ENCODE measurements at regions of chr7 and their contacts with region 1.

Region 1: GRCh38 chr7:43700059-43700501 is 29.2 kb downstream of the COA1 start:
- DNase-seq: no peak
- ATAC-seq: peak; percentile 50
- H3K4me3 Mint-ChIP-seq: no peak overlapping the region
- H3K27ac Mint-ChIP-seq: no peak overlapping the region
- H3K4me1 Mint-ChIP-seq: peaks cover 60% of the 10 kb centered on the region
- H3K27me3 Mint-ChIP-seq: no peaks in the 10 kb centered on the region
- CTCF ChIP-seq: peak; percentile 91

Region 2: DNA sequence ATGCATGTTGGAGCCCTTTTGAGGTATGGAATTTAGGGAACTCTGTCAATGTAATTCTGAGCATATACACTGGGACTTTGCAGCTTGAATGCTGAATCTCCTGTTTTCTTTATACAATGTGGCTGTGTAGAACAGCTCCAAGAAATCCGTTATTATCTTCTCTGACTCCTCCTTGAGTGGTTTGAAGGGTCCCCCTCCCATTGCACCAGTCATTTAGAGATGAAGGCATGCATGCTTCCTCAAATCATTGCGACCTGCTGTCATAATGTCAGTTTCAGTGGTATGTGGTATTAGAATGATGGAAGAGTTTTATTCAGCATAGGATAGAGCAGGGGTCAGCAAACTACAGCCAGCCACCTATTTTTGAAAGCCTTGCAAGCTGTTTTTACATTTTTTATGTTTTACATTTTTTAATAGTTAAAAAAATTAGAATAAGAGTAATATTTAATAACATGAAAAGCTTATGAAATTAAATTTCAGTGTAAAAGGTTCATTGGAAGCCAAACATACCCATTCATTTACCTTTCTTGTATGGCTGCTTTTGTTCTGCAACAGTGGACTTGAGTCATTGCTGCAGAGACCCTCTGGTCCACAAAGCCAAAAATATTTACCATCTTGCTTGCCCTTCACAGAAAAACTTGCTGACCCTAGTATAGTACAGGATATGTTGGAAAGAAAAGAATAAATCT is 109.1 kb before region 1 on chr7:
- CTCF ChIA-PET with region 1: interaction called, 452 read pairs
- POLR2A ChIA-PET with region 1: interaction called, 3 read pairs
- intact Hi-C with region 1: no loop called
- DNase-seq: peak; percentile 77
- ATAC-seq: peak; percentile 56
- H3K4me3 Mint-ChIP-seq: peak overlapping the region; percentile 46
- H3K27ac Mint-ChIP-seq: peak overlapping the region; percentile 86
- H3K4me1 Mint-ChIP-seq: peaks cover 80% of the 10 kb centered on the region
- H3K27me3 Mint-ChIP-seq: no peaks in the 10 kb centered on the region
- CTCF ChIP-seq: no peak

Region 3: DNA sequence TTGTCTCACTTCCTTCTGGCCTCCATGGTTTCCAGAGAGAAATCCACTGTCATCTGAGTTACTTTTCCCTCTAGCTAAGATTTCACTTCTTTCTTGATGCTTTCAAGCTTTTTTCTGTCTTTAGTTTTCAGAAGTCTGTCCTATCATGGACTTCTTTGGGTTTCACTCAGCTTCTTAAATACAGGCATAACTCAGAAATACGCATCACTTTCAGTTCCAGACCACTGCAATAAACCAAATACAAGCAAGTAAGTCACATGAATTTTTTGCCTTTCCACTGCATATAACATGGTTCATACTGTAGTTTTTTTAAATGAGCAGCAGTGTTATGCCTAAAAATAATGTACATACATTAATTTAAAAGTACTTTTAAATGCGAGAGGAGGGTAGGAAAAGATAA is 68.5 kb before region 1 on chr7:
- CTCF ChIA-PET with region 1: interaction called, 18 read pairs
- POLR2A ChIA-PET with region 1: no interaction called
- intact Hi-C with region 1: no loop called
- DNase-seq: no peak
- ATAC-seq: peak; percentile 47
- H3K4me3 Mint-ChIP-seq: peak overlapping the region; percentile 24
- H3K27ac Mint-ChIP-seq: peak overlapping the region; percentile 90
- H3K4me1 Mint-ChIP-seq: peaks cover 94% of the 10 kb centered on the region
- H3K27me3 Mint-ChIP-seq: no peaks in the 10 kb centered on the region
- CTCF ChIP-seq: no peak

Region 4: DNA sequence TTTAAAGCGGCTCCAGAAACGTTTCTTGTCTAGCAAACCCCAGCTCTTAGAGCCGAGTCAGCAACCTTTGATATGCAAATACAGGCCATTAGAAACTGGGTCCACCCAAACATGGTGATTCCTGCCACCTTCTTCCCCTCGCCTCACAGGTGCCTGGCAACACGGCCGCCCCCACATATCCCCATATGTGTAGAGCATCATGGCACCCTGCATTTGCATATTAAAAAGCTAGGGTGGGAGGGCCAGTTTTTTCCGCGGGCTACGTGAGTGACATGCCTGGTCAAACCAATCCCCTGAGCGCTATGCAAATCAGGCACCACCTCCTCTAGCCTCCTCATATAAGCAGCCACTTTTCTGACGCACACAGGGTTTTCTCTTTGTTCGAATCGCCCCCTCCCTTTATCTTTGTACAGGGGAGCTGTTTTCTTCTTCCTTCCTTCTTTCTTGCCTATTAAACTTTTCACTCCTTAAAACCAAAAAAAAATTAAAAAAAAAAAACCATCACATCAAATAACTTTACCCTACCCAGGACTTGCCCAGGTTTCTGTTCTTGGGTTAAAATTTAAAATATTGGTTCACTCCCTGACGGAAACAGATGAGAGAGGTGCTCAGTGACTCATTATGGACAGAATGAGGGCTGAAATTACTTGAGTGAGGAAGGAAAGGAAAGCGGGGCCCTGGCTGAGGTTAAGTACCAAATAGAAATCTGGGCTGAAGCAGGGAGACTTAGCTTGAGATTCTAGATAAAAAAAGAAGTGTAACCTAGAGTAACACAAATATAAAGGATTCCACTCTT is 30.6 kb before region 1 on chr7:
- CTCF ChIA-PET with region 1: interaction called, 14 read pairs
- POLR2A ChIA-PET with region 1: no interaction called
- intact Hi-C with region 1: no loop called
- DNase-seq: peak; percentile 95
- ATAC-seq: peak; percentile 85
- H3K4me3 Mint-ChIP-seq: peak overlapping the region; percentile 75
- H3K27ac Mint-ChIP-seq: peak overlapping the region; percentile 97
- H3K4me1 Mint-ChIP-seq: peaks cover 79% of the 10 kb centered on the region
- H3K27me3 Mint-ChIP-seq: no peaks in the 10 kb centered on the region
- CTCF ChIP-seq: no peak

Region 5: GRCh38 chr7:43729214-43729923 is 29.3 kb after region 1 on chr7 and contains the start of gene COA1:
- CTCF ChIA-PET with region 1: interaction called, 14 read pairs
- POLR2A ChIA-PET with region 1: interaction called, 6 read pairs
- intact Hi-C with region 1: no loop called
- DNase-seq: peak; percentile 85
- ATAC-seq: peak; percentile 92
- H3K4me3 Mint-ChIP-seq: peak within 1 kb of the TSS; percentile 94
- H3K27ac Mint-ChIP-seq: peak within 1 kb of the TSS; percentile 91
- H3K4me1 Mint-ChIP-seq: peaks cover 33% of the 10 kb centered on the region
- H3K27me3 Mint-ChIP-seq: peaks cover 2% of the 10 kb centered on the region
- CTCF ChIP-seq: peak; percentile 26
- total RNA-seq, gene COA1: 78.8 to 85.6 TPM

Measured in activated CD8-positive, alpha-beta T cell treated with anti-CD3 and anti-CD28 coated beads for 36 hours (primary cell).